ENCODE measurements at regions of chr18 and their contacts with region 1.

Region 1: GRCh38 chr18:76398896-76399612 is 96.0 kb downstream of the ZNF516 start:
- DNase-seq: peak; percentile 47 to 78 (median 71)
- ATAC-seq: peak; percentile 93
- H3K4me3 ChIP-seq: no peak overlapping the region
- H3K4me3 Mint-ChIP-seq: peak overlapping the region in 1 of 10 donors; percentile 12
- H3K27ac ChIP-seq: no peak overlapping the region
- H3K27ac Mint-ChIP-seq: peak overlapping the region in 2 of 9 donors; percentile 41 to 73
- H3K4me1 ChIP-seq: no peaks in the 10 kb centered on the region
- H3K4me1 Mint-ChIP-seq: peaks cover 5 to 38% (median 27%) of the 10 kb centered on the region in 7 donors
- H3K27me3 ChIP-seq: no peaks in the 10 kb centered on the region
- H3K27me3 Mint-ChIP-seq: peaks cover 0 to 17% (median 0%) of the 10 kb centered on the region in 5 donors

Region 2: GRCh38 chr18:76410660-76411417 is 11.8 kb after region 1 on chr18:
- CTCF ChIA-PET with region 1: interaction called, 11 read pairs
- POLR2A ChIA-PET with region 1: no interaction called
- intact Hi-C with region 1: no loop called
- DNase-seq: peak in 1 of 9 donors; percentile 18
- ATAC-seq: no peak
- H3K4me3 ChIP-seq: no peak overlapping the region
- H3K4me3 Mint-ChIP-seq: peak overlapping the region in 3 of 10 donors; percentile 0 to 28 (median 6)
- H3K27ac ChIP-seq: no peak overlapping the region
- H3K27ac Mint-ChIP-seq: peak overlapping the region in 1 of 9 donors; percentile 54
- H3K4me1 ChIP-seq: peaks cover 0 to 4% of the 10 kb centered on the region in 2 donors
- H3K4me1 Mint-ChIP-seq: peaks cover 10 to 73% (median 59%) of the 10 kb centered on the region in 7 donors
- H3K27me3 ChIP-seq: no peaks in the 10 kb centered on the region
- H3K27me3 Mint-ChIP-seq: peaks cover 0 to 15% (median 0%) of the 10 kb centered on the region in 5 donors

Region 3: DNA sequence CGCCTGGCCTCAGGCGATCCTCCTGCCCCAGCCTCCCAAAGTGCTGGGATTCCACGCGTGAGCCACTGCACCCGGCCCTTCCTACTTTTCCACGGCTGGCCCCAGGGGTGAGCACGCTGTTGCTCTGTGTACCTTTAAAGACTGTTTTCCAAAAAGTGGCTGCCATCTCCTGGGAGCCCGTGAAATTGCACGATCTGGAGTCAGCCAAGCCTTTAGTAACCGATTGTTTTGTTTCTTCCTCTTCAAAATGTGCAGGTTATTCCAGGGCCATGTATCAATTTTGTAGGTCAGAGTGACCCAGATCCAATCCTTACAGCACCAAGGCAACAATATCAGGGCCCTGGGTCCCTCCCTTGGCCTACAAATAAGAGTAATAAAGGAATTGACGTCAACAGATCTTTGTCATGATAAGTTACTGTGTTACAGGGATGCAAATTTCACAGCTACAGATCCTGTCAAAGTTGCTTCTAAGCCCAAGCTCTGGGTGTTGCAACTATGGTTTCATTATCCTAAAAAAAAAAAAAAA is 287.7 kb after region 1 on chr18:
- CTCF ChIA-PET with region 1: interaction called, 14 read pairs
- POLR2A ChIA-PET with region 1: no interaction called
- intact Hi-C with region 1: loop called (anchors 1 kb)
- DNase-seq: peak in 5 of 9 donors; percentile 14 to 23 (median 18)
- ATAC-seq: peak; percentile 75
- H3K4me3 ChIP-seq: no peak overlapping the region
- H3K4me3 Mint-ChIP-seq: no peak overlapping the region
- H3K27ac ChIP-seq: no peak overlapping the region
- H3K27ac Mint-ChIP-seq: peak overlapping the region in 1 of 9 donors; percentile 34
- H3K4me1 ChIP-seq: no peaks in the 10 kb centered on the region
- H3K4me1 Mint-ChIP-seq: peaks cover 0 to 13% (median 7%) of the 10 kb centered on the region in 7 donors
- H3K27me3 ChIP-seq: no peaks in the 10 kb centered on the region
- H3K27me3 Mint-ChIP-seq: peaks cover 10 to 46% (median 26%) of the 10 kb centered on the region in 5 donors